ENCODE measurements at regions of chr9 and their contacts with region 1.

Region 1: GRCh38 chr9:18319918-18320445 is 154.0 kb upstream of the ADAMTSL1 start:
- DNase-seq: no peak
- ATAC-seq: no peak
- H3K4me3 ChIP-seq: no peak overlapping the region
- H3K27ac ChIP-seq: no peak overlapping the region
- H3K4me1 ChIP-seq: no peaks in the 10 kb centered on the region
- H3K27me3 ChIP-seq: no peaks in the 10 kb centered on the region
- CTCF ChIP-seq: no peak

Region 2: GRCh38 chr9:18379073-18379811 is 59.3 kb after region 1 on chr9:
- intact Hi-C with region 1: loop called in 1 of 2 experiments (anchors 10 kb)
- DNase-seq: no peak
- ATAC-seq: no peak
- H3K4me3 ChIP-seq: no peak overlapping the region
- H3K27ac ChIP-seq: no peak overlapping the region
- H3K4me1 ChIP-seq: no peaks in the 10 kb centered on the region
- H3K27me3 ChIP-seq: peaks cover 0 to 2% (median 0%) of the 10 kb centered on the region in 3 donors
- CTCF ChIP-seq: no peak